Transverse colon (tissue), 4 donors: ENCODE measurements at regions of chr2 and their contacts with region 1.

Region 1: DNA sequence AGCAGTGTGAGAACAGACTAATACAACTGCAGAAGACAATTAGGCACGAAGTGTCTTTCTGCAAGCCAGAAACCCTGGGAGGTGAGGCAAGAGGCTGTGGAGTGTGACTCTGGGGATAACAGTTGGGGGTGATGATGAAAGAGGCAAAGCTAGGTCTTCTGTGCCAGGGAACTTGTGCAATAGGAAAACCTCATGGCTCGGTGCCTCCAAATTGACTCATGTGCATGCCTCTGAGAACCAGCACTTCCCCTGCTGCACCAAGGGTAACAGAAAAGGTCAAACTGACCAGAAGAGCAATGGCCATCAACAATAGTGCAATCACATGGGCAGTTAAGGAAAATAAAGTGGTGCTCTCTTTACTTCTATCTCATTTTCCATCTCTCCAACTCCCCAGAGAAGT is 136.4 kb downstream of the SCG2 start:
- DNase-seq: peak; percentile 48
- H3K4me3 ChIP-seq: no peak overlapping the region
- H3K27ac ChIP-seq: no peak overlapping the region
- H3K4me1 ChIP-seq: no peaks in the 10 kb centered on the region
- H3K27me3 ChIP-seq: no peaks in the 10 kb centered on the region
- CTCF ChIP-seq: no peak
- EP300 ChIP-seq: no peak
- POLR2A ChIP-seq: no peak

Region 2: DNA sequence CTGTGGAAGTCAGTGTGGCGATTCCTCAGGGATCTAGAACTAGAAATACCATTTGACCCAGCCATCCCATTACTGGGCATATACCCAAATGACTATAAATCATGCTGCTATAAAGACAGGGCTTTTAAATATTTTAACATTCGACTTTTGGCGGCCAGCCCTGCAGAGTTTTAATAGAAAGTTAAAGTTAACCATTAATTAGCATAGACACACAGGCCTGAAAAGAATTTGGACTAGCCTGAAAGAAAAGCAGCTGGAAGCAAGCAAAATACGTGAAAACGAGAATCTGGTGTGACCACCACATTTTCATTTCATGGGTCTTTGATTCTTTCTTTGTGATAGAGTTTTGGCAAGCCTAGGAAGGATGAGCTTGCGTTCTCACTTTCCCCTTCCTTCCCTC is 47.7 kb before region 1 on chr2:
- in situ Hi-C with region 1: no loop called
- intact Hi-C with region 1: loop called (anchors 2 kb)
- DNase-seq: no peak
- H3K4me3 ChIP-seq: no peak overlapping the region
- H3K27ac ChIP-seq: no peak overlapping the region
- H3K4me1 ChIP-seq: no peaks in the 10 kb centered on the region
- H3K27me3 ChIP-seq: no peaks in the 10 kb centered on the region
- CTCF ChIP-seq: no peak
- EP300 ChIP-seq: no peak
- POLR2A ChIP-seq: no peak

Region 3: GRCh38 chr2:223528036-223528435 is 62.2 kb after region 1 on chr2:
- in situ Hi-C with region 1: no loop called
- intact Hi-C with region 1: no loop called
- DNase-seq: no peak
- H3K4me3 ChIP-seq: no peak overlapping the region
- H3K27ac ChIP-seq: no peak overlapping the region
- H3K4me1 ChIP-seq: no peaks in the 10 kb centered on the region
- H3K27me3 ChIP-seq: no peaks in the 10 kb centered on the region
- CTCF ChIP-seq: no peak
- EP300 ChIP-seq: no peak
- POLR2A ChIP-seq: no peak